ENCODE measurements at regions of chr1 and their contacts with region 1.

Region 1: DNA sequence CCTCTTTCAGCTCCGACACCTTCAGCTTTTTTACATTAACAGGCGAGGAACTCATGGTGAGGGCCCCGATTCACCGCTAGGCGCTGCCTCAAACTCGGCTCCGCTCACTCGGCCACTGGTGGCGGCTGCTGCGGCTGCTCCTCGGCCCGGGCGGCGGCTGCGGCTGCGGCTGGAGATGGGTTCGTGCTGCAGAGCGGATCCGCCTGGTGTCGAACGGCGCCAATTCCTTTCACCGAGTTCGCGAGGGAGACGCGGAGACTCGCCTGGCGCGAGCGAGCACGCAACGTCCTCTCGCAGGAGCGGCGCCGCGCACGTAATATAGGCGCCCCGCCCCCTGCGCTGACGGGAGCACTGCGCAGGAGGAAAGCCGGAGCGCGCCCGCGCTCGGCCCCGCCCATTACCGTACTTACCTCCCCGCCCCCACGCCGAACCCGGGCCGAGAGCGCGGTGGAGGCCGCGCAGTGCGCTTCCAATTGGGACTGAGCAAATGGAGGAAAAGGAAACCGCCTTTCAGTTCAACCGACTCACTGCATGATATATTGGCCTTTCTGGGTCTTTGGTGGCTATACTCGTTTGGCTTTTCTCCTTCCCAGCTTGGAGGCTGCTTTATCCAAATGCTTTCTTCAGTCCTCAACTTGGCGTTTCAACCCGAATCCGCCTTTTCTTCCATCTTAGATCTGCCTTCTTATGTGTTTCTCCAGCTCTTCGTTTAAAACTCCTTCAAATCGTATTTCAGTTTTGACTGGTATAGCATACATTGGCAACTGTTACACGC is at the start of gene HNRNPU:
- DNase-seq: peak; percentile 99
- H3K4me3 Mint-ChIP-seq: peak within 1 kb of the TSS; percentile 93
- H3K27ac Mint-ChIP-seq: peak within 1 kb of the TSS; percentile 96
- H3K4me1 Mint-ChIP-seq: peaks cover 32% of the 10 kb centered on the region
- H3K27me3 Mint-ChIP-seq: no peaks in the 10 kb centered on the region
- CTCF ChIP-seq: peak; percentile 51
- total RNA-seq, gene HNRNPU: 454 and 572 TPM in 2 replicates

Region 2: GRCh38 chr1:244652699-244653466 is 211.6 kb before region 1 on chr1 and contains the start of gene DESI2:
- CTCF ChIA-PET with region 1: no interaction called
- POLR2A ChIA-PET with region 1: interaction called, 20 read pairs
- intact Hi-C with region 1: no loop called
- DNase-seq: peak; percentile 100
- H3K4me3 Mint-ChIP-seq: no peak within 1 kb of the TSS
- H3K27ac Mint-ChIP-seq: peak within 1 kb of the TSS; percentile 63
- H3K4me1 Mint-ChIP-seq: peaks cover 17% of the 10 kb centered on the region
- H3K27me3 Mint-ChIP-seq: no peaks in the 10 kb centered on the region
- CTCF ChIP-seq: peak; percentile 86
- total RNA-seq, gene DESI2: 99.0 and 101 TPM in 2 replicates

Region 3: DNA sequence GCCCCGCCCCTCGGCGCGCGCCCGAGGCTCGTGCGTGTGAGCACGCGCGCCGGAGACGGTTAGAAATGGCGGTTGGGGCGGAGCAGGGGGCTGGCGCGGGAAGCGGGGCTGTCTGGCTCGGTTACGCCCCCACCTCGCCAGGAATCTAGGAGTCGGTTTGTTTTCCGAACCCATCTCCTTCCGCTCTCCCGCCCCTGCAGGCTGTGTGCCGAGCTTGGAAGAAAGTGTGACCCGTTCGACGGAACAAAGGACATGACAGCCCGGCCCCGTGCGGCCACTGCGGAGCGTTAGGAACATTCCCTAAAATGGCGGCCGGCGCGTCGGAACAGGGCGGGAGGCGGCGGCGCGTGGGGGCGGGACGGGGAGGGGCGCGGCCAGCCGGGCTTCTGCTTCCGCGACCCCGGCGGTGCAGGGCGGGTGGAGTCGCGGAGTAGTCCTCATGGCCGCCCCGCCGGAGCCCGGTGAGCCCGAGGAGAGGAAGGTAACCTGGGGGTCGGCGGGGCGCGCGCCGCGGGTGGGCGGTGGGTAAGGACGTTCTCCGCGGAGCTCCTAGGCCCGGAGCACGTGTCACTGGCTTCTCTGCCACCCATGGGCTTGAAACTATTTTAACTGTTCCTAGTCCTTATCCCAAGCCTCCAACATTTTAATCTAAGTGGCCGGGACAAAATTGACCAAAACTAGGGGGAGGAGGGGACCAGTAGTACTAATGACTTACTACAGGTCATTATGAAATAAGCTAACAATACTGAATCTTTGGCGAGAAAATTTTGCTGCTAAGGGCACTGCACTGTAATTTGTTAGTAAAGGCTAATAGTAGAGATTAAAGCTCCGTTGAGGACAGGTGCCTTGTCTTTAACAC is 28.9 kb before region 1 on chr1 and contains the start of gene COX20:
- CTCF ChIA-PET with region 1: interaction called, 52 read pairs
- POLR2A ChIA-PET with region 1: interaction called, 1,456 read pairs
- intact Hi-C with region 1: loop called (anchors 1 kb)
- DNase-seq: peak; percentile 98
- H3K4me3 Mint-ChIP-seq: peak within 1 kb of the TSS; percentile 81
- H3K27ac Mint-ChIP-seq: peak within 1 kb of the TSS; percentile 99
- H3K4me1 Mint-ChIP-seq: peaks cover 33% of the 10 kb centered on the region
- H3K27me3 Mint-ChIP-seq: no peaks in the 10 kb centered on the region
- CTCF ChIP-seq: no peak
- total RNA-seq, gene COX20: 44.6 and 46.1 TPM in 2 replicates

Region 4: DNA sequence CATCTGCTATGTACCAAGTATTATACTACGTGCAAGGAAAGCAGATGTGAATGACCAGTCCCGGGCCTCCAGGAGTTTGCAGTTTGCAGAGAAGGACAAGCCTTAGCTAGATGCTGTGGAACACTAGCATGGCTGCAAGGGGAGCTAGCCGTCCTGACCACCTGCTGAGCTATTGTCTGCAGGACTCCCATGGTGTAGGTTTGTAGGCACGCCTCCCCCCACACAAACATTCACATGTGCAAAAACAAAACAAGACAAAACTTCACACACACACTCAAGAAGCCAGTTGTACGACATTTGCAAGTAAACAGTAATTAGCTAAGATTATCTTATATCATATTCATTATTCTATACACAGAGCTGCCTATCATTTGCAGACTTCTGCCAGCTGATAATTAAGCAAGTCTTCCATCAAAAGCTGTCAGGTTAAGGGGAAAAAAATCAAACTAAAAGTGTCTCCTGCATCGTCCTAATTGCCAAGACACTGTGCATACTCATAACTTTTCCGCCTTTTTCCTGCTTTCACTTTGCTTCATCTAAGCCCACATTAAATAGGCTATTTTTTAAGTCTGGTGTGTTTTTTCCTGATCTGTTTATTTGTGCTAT is 10.6 kb after region 1 on chr1:
- CTCF ChIA-PET with region 1: interaction called, 5 read pairs
- POLR2A ChIA-PET with region 1: interaction called, 18 read pairs
- intact Hi-C with region 1: no loop called
- DNase-seq: no peak
- H3K4me3 Mint-ChIP-seq: no peak overlapping the region
- H3K27ac Mint-ChIP-seq: no peak overlapping the region
- H3K4me1 Mint-ChIP-seq: peaks cover 9% of the 10 kb centered on the region
- H3K27me3 Mint-ChIP-seq: no peaks in the 10 kb centered on the region
- CTCF ChIP-seq: no peak

Region 5: DNA sequence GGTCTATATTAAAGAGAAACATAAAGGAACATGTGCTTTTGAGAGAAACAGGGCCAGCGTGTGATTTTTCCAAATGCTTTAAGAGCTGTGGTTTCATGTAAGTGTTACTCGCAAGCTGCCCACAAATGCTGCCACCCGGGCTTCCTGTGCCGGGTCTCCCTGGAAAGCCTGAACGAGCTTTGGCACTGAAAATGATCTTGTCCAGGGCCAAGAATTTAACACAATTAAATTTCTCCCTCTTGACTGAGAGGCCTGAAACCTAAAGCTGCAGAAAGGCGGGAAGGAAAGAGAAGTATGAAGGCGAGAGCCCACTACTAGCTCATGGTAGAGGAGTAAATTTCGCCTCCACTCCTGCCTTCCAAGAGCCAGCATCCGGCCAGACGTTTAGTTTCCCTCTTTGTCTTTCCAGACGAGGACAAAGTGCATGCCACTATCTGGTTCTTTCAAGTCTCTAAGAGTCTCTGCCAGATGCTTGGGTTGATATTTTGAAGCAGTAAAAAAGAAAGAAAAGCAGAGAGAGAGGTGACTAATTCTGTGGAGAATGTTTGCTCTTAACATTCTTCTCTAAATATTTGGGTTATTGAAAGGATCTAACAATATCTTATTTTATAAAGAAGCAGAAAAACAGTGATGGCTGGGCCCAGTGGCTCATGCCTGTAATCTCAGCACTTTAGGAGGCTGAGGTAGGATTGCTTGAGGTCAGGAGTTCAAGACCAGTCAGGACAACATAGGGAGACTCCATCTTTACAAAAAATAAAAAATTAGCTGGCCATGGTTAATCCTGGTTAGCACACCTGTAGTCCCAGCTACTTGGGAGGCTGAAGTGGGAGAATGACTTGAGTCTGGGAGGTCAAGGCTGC is 99.9 kb after region 1 on chr1:
- CTCF ChIA-PET with region 1: interaction called, 18 read pairs
- POLR2A ChIA-PET with region 1: interaction called, 719 read pairs
- intact Hi-C with region 1: no loop called
- DNase-seq: peak; percentile 57
- H3K4me3 Mint-ChIP-seq: peak overlapping the region; percentile 35
- H3K27ac Mint-ChIP-seq: peak overlapping the region; percentile 93
- H3K4me1 Mint-ChIP-seq: peaks cover 27% of the 10 kb centered on the region
- H3K27me3 Mint-ChIP-seq: no peaks in the 10 kb centered on the region
- CTCF ChIP-seq: no peak

Region 6: GRCh38 chr1:245051349-245052221 is 187.1 kb after region 1 on chr1:
- CTCF ChIA-PET with region 1: interaction called, 4 read pairs
- POLR2A ChIA-PET with region 1: interaction called, 175 read pairs
- intact Hi-C with region 1: no loop called
- DNase-seq: no peak
- H3K4me3 Mint-ChIP-seq: no peak overlapping the region
- H3K27ac Mint-ChIP-seq: no peak overlapping the region
- H3K4me1 Mint-ChIP-seq: no peaks in the 10 kb centered on the region
- H3K27me3 Mint-ChIP-seq: no peaks in the 10 kb centered on the region
- CTCF ChIP-seq: no peak